ENCODE measurements at regions of chr11 and their contacts with region 1.

Region 1: DNA sequence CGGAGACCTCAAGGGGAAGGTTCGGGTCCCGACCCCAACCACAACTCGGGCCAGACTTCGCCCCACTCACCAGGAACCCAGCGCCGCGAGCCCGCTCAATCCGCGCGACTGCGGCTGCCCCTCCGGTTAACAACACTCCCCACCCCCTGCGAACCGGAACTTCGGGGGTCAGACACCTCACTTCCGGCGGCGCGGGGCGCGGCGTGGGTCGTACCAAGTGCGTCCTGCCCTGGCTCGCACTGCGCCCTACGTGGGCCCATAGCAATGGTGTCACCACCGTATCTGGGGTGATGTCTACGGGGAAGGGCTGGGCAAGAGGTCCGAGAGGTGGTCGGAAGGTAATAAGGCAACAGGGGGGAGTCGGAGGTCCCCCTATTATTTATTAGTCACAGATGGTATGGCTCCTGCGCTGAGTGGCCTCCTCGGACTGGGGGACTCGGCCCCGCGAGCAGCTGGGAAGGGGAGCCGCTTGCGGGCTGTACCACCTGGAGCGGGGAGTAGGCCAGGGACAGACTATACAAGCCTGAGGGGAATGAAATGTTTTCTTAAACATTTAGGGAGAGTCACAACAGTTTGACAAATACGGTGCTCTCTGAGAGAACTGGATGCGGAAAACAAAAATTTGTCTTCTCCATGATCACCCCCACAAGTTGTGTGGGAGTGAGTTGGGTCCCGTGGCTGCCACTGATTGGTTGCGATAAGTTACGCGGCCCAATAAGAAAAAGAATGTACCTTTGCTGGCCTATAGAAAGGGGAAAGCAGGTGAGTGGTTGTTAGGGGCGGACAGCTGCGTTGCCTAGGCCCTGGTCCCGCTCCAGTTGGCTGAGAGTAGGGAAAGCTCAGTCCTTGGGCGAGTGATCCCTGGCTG is at the start of gene SYVN1:
- DNase-seq: peak; percentile 91 to 96 (median 96)
- ATAC-seq: peak; percentile 93 to 94
- H3K4me3 ChIP-seq: peak within 1 kb of the TSS; percentile 66
- H3K27ac ChIP-seq: peak within 1 kb of the TSS; percentile 88
- H3K4me1 ChIP-seq: peaks cover 6% of the 10 kb centered on the region
- H3K27me3 ChIP-seq: no peaks in the 10 kb centered on the region
- total RNA-seq, gene SYVN1: 28.5 to 40.7 (median 32.8) TPM

Region 2: DNA sequence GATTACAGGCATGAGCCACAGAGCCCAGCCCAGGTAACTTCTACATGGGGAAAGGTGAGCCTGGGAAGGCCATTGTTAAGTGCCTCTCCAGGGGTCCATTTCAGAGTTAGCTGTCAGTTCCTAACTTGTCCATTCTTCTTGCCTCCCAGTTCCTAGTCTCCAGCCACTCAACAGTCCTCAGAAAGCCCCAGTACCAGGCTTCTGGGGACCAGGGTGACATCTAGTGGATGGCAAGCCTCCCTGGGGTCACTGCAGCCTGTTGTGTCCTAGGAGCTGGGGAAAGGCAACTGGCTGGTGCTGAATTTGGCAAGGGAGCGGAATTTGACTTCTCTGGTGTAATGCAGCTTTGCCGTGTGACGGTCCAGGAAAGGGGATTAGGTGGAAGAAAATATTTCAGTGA is 1626.6 kb before region 1 on chr11:
- intact Hi-C with region 1: no loop called
- DNase-seq: peak; percentile 55 to 74 (median 65)
- ATAC-seq: peak; percentile 58 to 68
- H3K4me3 ChIP-seq: no peak overlapping the region
- H3K27ac ChIP-seq: no peak overlapping the region
- H3K4me1 ChIP-seq: peaks cover 3% of the 10 kb centered on the region
- H3K27me3 ChIP-seq: no peaks in the 10 kb centered on the region

Region 3: GRCh38 chr11:64787526-64788320 is 346.9 kb before region 1 on chr11:
- intact Hi-C with region 1: no loop called
- DNase-seq: peak; percentile 72 to 84 (median 83)
- ATAC-seq: peak; percentile 34 to 68
- H3K4me3 ChIP-seq: no peak overlapping the region
- H3K27ac ChIP-seq: no peak overlapping the region
- H3K4me1 ChIP-seq: no peaks in the 10 kb centered on the region
- H3K27me3 ChIP-seq: no peaks in the 10 kb centered on the region

Region 4: GRCh38 chr11:64810271-64810890 is 324.2 kb before region 1 on chr11 and contains the start of gene MEN1:
- intact Hi-C with region 1: loop called in 1 of 4 experiments (anchors 10 kb)
- DNase-seq: peak; percentile 97 to 99 (median 98)
- ATAC-seq: peak; percentile 99
- H3K4me3 ChIP-seq: peak within 1 kb of the TSS; percentile 96
- H3K27ac ChIP-seq: peak within 1 kb of the TSS; percentile 43
- H3K4me1 ChIP-seq: peaks cover 4% of the 10 kb centered on the region
- H3K27me3 ChIP-seq: no peaks in the 10 kb centered on the region
- total RNA-seq, gene MEN1: 9.6 to 11.7 (median 10.1) TPM

Region 5: DNA sequence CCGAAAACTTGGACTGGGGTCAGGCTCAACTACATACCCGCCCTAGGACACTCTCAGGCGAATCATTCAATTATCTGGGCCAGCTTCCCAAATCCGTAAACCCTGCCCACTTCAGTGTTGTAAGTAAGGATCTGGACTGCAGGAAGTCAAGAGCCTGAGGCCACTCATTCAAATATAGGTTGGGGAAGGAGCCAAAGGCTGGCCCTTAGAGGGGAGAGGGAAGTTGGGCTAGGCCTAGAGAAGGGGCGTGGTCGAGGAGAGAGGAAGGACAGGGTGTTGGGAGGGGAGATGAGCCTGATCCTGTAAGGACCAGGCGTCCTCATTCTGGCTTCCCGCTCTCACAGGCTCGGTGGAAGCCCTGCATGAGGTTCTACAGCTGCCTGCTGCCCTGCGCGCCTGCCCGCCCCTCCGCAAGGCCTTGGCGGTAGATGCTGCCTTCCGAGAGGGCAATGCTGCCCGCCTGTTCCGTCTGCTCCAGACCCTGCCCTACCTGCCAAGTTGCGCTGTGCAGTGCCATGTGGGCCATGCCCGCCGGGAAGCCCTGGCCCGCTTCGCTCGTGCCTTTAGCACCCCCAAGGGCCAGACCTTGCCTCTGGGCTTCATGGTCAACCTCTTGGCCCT is 90.6 kb before region 1 on chr11:
- intact Hi-C with region 1: no loop called
- DNase-seq: peak; percentile 48 to 78 (median 69)
- ATAC-seq: peak in 1 of 2 donors; percentile 5
- H3K4me3 ChIP-seq: no peak overlapping the region
- H3K27ac ChIP-seq: no peak overlapping the region
- H3K4me1 ChIP-seq: no peaks in the 10 kb centered on the region
- H3K27me3 ChIP-seq: no peaks in the 10 kb centered on the region

Region 6: GRCh38 chr11:65180877-65181568 is 46.4 kb after region 1 on chr11:
- intact Hi-C with region 1: loop called in 1 of 4 experiments (anchors 2 kb)
- DNase-seq: peak; percentile 72 to 90 (median 86)
- ATAC-seq: peak; percentile 67 to 68
- H3K4me3 ChIP-seq: peak overlapping the region; percentile 85
- H3K27ac ChIP-seq: peak overlapping the region; percentile 76
- H3K4me1 ChIP-seq: no peaks in the 10 kb centered on the region
- H3K27me3 ChIP-seq: no peaks in the 10 kb centered on the region

Region 7: GRCh38 chr11:65354265-65355012 is 219.8 kb after region 1 on chr11 and contains the start of gene TIGD3:
- intact Hi-C with region 1: no loop called
- DNase-seq: peak; percentile 98 to 99 (median 99)
- ATAC-seq: peak; percentile 95 to 96
- H3K4me3 ChIP-seq: peak within 1 kb of the TSS; percentile 63
- H3K27ac ChIP-seq: peak within 1 kb of the TSS; percentile 71
- H3K4me1 ChIP-seq: peaks cover 6% of the 10 kb centered on the region
- H3K27me3 ChIP-seq: no peaks in the 10 kb centered on the region
- total RNA-seq, gene TIGD3: 0.14 to 0.23 (median 0.15) TPM in 3 of 4 donors, not detected in the other

Measured in right cardiac atrium (tissue), 5 donors.